Heart right ventricle (tissue), 16 donors: ENCODE measurements at regions of chr17 and their contacts with region 1.

Region 1: GRCh38 chr17:879549-880442 is 97.6 kb downstream of the MRM3 start:
- DNase-seq: peak; percentile 83 to 86
- ATAC-seq: peak; percentile 32 to 76 (median 66)
- H3K4me3 ChIP-seq: peak overlapping the region in 2 of 10 donors; percentile 5 to 11
- H3K27ac ChIP-seq: peak overlapping the region in 9 of 10 donors; percentile 64 to 91 (median 83)
- H3K4me1 ChIP-seq: peaks cover 4 to 63% (median 48%) of the 10 kb centered on the region in 9 donors
- H3K27me3 ChIP-seq: no peaks in the 10 kb centered on the region
- CTCF ChIP-seq: peak; percentile 22 to 75 (median 64)

Region 2: DNA sequence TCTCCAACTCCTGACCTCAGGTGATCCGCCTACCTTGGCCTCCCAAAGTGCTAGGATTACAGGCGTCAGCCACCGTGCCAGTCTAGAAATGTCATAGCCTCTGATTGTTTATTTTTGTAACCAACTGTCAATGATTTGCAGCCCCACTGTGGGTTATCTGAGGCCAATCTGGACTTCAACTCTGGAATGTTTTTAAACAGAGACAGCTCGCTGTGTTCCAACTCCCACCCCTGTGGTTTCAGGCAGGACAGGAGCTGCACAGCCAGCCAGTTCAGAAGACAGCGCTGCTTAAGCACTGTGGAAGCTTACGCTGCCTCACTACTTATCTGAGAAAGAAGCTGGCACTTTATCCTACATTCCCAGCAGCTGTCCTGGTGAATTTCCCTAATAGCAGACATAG is 78.1 kb before region 1 on chr17:
- intact Hi-C with region 1: loop called in 3 of 10 experiments (anchors 10 kb)
- DNase-seq: no peak
- ATAC-seq: peak in 1 of 8 donors; percentile 55
- H3K4me3 ChIP-seq: no peak overlapping the region
- H3K27ac ChIP-seq: no peak overlapping the region
- H3K4me1 ChIP-seq: peaks cover 0 to 9% (median 0%) of the 10 kb centered on the region in 9 donors
- H3K27me3 ChIP-seq: no peaks in the 10 kb centered on the region
- CTCF ChIP-seq: no peak

Region 3: DNA sequence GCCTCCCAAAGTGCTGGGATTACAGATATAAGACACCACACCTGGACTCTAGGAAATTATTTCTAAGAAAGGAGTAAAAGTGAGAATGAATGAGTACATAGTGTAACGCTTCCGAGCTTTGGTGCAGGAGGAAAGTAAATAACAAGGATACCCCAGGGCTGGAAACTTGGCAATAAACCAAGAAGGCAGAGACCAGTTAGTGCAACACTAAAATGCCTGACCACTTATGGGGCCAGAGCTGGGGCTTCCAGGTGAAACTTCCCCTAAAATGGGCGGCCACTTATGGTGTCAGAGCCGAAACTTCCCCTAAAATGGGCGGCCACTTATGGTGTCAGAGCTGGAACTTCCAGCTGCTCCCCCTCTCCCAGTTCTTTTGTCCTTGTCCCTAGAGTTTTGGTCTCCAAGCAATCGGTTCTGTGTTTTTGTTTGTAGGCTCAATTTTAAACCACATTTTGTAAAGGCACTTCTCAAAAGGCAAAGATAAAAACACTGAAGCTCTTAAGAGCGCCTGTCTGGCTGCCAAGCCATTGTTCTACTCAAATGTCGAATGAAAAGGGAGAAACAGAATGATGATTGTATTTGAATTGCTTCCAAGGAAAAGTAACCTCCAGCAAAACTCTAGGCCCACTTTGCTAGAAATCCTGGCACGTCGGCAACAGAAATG is 35.9 kb after region 1 on chr17:
- intact Hi-C with region 1: loop called in 2 of 10 experiments (anchors 5 kb)
- DNase-seq: peak; percentile 30 to 75
- ATAC-seq: peak; percentile 66 to 88 (median 82)
- H3K4me3 ChIP-seq: peak overlapping the region in 4 of 10 donors; percentile 20 to 32 (median 27)
- H3K27ac ChIP-seq: peak overlapping the region; percentile 39 to 89 (median 80)
- H3K4me1 ChIP-seq: peaks cover 2 to 50% (median 24%) of the 10 kb centered on the region in 9 donors
- H3K27me3 ChIP-seq: no peaks in the 10 kb centered on the region
- CTCF ChIP-seq: no peak

Region 4: GRCh38 chr17:979538-980405 is 100.0 kb after region 1 on chr17 and contains the start of gene NXN:
- intact Hi-C with region 1: loop called (anchors 1 to 10 kb)
- DNase-seq: peak; percentile 85 to 94
- ATAC-seq: peak; percentile 81 to 97 (median 94)
- H3K4me3 ChIP-seq: peak within 1 kb of the TSS; percentile 49 to 94 (median 81)
- H3K27ac ChIP-seq: peak within 1 kb of the TSS; percentile 43 to 84 (median 80)
- H3K4me1 ChIP-seq: peaks cover 4 to 52% (median 37%) of the 10 kb centered on the region in 9 donors
- H3K27me3 ChIP-seq: peaks cover 0 to 25% (median 0%) of the 10 kb centered on the region in 7 donors
- CTCF ChIP-seq: peak in 5 of 9 donors; percentile 16 to 53 (median 38)
- total RNA-seq, gene NXN: 11.6 to 24.4 (median 15.9) TPM